ENCODE measurements at regions of chr4 and their contacts with region 1.

Region 1: DNA sequence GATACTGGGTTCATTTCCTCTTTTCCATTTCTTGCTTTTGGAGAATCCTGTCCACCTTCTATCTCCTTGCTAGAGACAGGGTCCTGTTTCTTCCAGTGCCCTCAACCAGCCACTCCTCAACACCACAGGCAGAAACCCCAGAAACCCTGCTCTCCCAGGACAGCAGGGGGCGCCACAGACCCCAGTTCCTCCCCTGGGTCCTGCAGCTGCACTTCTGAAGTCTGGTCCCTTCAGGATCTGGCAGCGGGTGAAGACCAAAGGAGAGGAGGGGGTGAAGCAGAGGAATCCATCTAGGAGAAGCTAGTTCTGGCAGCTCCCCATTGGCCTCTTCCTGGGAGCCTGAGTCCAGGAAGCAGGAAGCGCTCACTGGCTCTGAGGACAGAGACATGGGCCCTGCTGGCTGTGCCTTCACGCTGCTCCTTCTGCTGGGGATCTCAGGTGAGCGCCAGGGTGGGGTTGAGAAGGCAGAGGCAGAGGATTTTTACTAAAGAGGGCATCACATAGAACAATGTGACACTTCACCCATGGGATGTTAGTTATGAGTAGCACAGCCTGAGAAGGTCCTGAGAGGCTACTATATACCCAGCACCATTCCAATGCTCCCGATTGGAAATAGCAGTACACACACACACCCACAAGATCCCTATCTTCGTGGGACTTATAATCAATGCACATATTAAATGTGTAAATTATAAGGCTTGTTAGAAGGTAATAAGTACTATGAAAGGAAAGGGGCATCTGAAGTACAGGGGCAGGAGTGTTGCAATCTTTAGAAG is at the start of gene PRSS48:
- DNase-seq: peak in 1 of 2 experiments; percentile 56
- H3K4me3 ChIP-seq: no peak within 1 kb of the TSS
- H3K27ac ChIP-seq: no peak within 1 kb of the TSS
- H3K4me1 ChIP-seq: no peaks in the 10 kb centered on the region
- H3K27me3 ChIP-seq: no peaks in the 10 kb centered on the region
- CTCF ChIP-seq: peak; percentile 75
- total RNA-seq, gene PRSS48: not detected in 2 replicates

Region 2: GRCh38 chr4:150337734-150338133 is 939.2 kb before region 1 on chr4:
- CTCF ChIA-PET with region 1: no interaction called
- POLR2A ChIA-PET with region 1: no interaction called
- intact Hi-C with region 1: no loop called
- DNase-seq: no peak
- H3K4me3 ChIP-seq: no peak overlapping the region
- H3K27ac ChIP-seq: no peak overlapping the region
- H3K4me1 ChIP-seq: no peaks in the 10 kb centered on the region
- H3K27me3 ChIP-seq: no peaks in the 10 kb centered on the region
- CTCF ChIP-seq: no peak

Region 3: DNA sequence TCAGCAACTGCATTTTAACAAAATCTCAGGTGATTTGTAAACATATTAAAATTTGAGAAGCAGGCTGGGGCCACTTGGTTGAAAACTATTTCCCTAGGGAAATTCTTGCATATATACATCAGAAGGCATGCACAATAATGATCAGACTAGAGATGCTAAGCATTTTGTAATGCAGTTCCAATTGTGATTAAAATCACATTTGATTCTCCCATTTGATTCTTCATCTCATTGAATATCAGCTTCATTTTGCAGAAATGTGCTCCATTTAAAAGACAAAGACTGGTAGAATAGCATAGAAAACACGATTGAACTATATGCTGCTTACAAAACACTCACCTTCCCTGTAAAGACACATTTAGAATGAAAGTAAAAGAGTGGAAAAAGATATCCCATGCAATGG is 99.6 kb after region 1 on chr4:
- CTCF ChIA-PET with region 1: no interaction called
- POLR2A ChIA-PET with region 1: interaction called, 11 read pairs
- intact Hi-C with region 1: no loop called
- DNase-seq: no peak
- H3K4me3 ChIP-seq: no peak overlapping the region
- H3K27ac ChIP-seq: no peak overlapping the region
- H3K4me1 ChIP-seq: no peaks in the 10 kb centered on the region
- H3K27me3 ChIP-seq: no peaks in the 10 kb centered on the region
- CTCF ChIP-seq: no peak

Region 4: GRCh38 chr4:151604238-151604637 is 327.3 kb after region 1 on chr4:
- CTCF ChIA-PET with region 1: no interaction called
- POLR2A ChIA-PET with region 1: no interaction called
- intact Hi-C with region 1: loop called (anchors 2 kb)
- DNase-seq: peak in 1 of 2 experiments; percentile 2
- H3K4me3 ChIP-seq: no peak overlapping the region
- H3K27ac ChIP-seq: no peak overlapping the region
- H3K4me1 ChIP-seq: no peaks in the 10 kb centered on the region
- H3K27me3 ChIP-seq: no peaks in the 10 kb centered on the region
- CTCF ChIP-seq: peak; percentile 69

Region 5: DNA sequence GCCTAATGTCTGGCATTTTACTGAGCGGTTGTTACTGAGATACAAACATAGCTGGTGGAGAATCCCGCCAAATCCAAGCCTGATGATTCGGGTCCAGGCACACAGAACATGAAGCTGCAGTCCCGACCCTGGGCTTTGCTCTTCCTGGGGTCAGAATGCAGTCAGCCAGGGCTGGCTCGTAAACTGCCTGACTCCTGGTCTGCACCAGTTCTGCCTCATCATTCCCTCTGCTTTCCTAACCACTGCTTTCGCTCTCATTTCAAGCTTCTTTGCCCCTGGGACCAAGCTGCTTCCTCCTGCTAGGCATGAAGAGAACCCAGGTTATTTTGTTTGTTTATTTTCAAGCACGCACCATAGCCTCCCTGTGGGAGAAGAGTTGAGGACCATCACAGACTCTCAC is 444.5 kb after region 1 on chr4:
- CTCF ChIA-PET with region 1: no interaction called
- POLR2A ChIA-PET with region 1: no interaction called
- intact Hi-C with region 1: no loop called
- DNase-seq: no peak
- H3K4me3 ChIP-seq: no peak overlapping the region
- H3K27ac ChIP-seq: no peak overlapping the region
- H3K4me1 ChIP-seq: no peaks in the 10 kb centered on the region
- H3K27me3 ChIP-seq: no peaks in the 10 kb centered on the region
- CTCF ChIP-seq: no peak

Measured in PC-9 (cell line).